Breast epithelium (tissue), 4 donors: ENCODE measurements at regions of chr16 and their contacts with region 1.

Region 1: DNA sequence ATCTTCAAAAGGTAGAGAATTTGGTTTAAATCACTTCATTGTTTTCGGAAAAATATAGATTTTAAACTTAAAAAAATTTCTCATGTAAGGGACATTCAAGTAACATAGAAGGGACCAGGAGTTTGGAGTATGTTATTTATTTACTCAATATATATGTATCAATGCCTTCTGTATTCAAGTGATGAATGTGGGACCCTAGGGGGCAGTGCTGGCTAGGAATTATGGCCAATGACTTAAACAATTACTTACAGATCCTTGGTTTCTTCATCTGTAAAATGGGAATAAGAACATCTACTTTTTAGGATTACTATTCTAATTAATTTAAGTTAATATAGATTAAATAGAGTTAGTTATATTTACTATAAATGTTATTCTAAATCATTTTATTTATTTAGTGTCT is 886.3 kb upstream of the RBFOX1 start:
- DNase-seq: no peak
- H3K4me3 ChIP-seq: no peak overlapping the region
- H3K27ac ChIP-seq: no peak overlapping the region
- H3K4me1 ChIP-seq: no peaks in the 10 kb centered on the region
- H3K27me3 ChIP-seq: no peaks in the 10 kb centered on the region
- CTCF ChIP-seq: no peak
- POLR2A ChIP-seq: no peak

Region 2: DNA sequence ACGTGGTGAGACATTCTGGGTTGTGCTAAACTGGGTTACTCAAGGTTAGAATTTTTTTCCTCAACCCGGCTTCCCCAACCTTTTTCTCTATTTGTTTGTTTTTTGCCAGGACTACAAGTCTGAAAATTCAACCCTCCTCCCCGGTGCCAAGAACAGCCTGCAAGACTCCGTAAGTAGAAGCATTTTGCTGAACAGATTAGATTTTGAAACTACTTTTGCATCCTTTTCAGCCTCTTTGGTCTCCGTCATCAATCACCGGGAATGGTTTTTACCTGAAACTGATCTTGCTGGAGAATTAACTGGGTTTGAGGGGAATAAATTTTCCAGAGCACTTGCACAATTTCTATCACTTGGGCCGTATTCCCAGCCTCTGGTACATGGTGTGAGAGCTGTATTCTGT is 847.6 kb before region 1 on chr16:
- intact Hi-C with region 1: no loop called
- DNase-seq: no peak
- H3K4me3 ChIP-seq: no peak overlapping the region
- H3K27ac ChIP-seq: no peak overlapping the region
- H3K4me1 ChIP-seq: no peaks in the 10 kb centered on the region
- H3K27me3 ChIP-seq: no peaks in the 10 kb centered on the region
- CTCF ChIP-seq: no peak
- POLR2A ChIP-seq: no peak

Region 3: GRCh38 chr16:6309271-6309670 is 137.1 kb before region 1 on chr16:
- intact Hi-C with region 1: no loop called
- DNase-seq: no peak
- H3K4me3 ChIP-seq: no peak overlapping the region
- H3K27ac ChIP-seq: no peak overlapping the region
- H3K4me1 ChIP-seq: no peaks in the 10 kb centered on the region
- H3K27me3 ChIP-seq: no peaks in the 10 kb centered on the region
- CTCF ChIP-seq: no peak
- POLR2A ChIP-seq: no peak

Region 4: DNA sequence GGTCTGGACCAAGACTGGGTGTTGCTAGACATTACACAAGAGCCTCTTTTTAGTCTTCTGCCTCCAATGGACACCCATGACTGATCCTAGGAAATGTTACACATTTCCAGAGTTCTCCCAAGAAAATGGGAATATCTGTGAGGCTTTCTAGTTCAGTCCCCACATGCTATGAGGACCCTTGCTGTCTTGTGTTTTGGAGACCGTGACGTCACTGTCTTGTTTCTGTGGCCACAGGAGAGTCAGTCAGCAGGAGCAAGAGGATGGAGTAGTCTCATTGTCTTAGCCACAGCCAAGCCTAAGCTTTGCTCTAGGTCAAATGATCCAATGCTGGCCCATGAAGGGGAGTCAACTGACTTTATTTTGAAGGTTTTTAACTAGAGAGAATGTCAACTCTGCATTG is 66.1 kb after region 1 on chr16:
- intact Hi-C with region 1: loop called (anchors 2 kb)
- DNase-seq: no peak
- H3K4me3 ChIP-seq: no peak overlapping the region
- H3K27ac ChIP-seq: no peak overlapping the region
- H3K4me1 ChIP-seq: no peaks in the 10 kb centered on the region
- H3K27me3 ChIP-seq: no peaks in the 10 kb centered on the region
- CTCF ChIP-seq: no peak
- POLR2A ChIP-seq: no peak

Region 5: GRCh38 chr16:8310323-8310722 is 1864.0 kb after region 1 on chr16:
- intact Hi-C with region 1: loop called (anchors 10 kb)
- DNase-seq: no peak
- H3K4me3 ChIP-seq: no peak overlapping the region
- H3K27ac ChIP-seq: no peak overlapping the region
- H3K4me1 ChIP-seq: no peaks in the 10 kb centered on the region
- H3K27me3 ChIP-seq: no peaks in the 10 kb centered on the region
- CTCF ChIP-seq: no peak
- POLR2A ChIP-seq: no peak